ENCODE measurements at regions of chr17 and their contacts with region 1.

Region 1: DNA sequence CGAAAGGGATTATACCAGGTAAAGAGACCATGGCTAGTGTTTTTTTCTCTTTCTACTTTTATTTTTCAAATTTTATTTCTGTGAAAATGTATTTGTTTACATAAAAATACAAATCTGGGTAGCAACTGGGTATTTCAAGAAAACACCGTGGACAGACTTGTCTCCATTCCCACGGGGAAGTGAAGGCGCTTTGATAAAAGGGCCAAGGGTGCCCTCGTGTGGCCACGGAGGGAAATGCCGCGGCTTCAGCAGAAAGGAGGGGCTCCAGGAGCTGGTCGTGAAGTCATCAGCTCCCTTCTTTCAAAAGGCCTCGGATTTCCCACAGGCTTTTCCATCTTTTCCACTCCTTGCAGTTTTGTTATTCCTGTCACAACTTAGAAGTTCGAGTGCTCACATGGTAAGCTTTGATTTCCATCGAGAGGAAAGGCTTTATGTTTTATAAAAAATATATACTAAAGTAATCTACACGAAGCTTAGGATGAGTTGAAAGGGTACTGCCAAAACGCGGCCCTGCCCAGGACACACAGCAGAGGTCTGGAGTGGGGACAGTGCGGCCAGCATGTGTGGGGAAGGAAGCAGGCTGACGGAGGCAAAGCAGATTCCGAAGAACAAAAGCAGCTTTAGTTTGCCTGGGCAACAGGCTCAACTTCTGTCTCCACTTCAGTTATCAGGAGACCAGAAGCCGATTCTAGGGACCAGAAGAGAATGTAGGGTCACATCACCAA is 15.3 kb upstream of the MNT start:
- DNase-seq: peak; percentile 84

Region 2: GRCh38 chr17:2380950-2381649 is 35.1 kb before region 1 on chr17:
- CTCF ChIA-PET with region 1: interaction called, 95 read pairs
- POLR2A ChIA-PET with region 1: interaction called, 22 read pairs
- DNase-seq: no peak

Region 3: GRCh38 chr17:2386400-2387085 is 29.6 kb before region 1 on chr17:
- CTCF ChIA-PET with region 1: interaction called, 95 read pairs
- POLR2A ChIA-PET with region 1: interaction called, 22 read pairs
- DNase-seq: no peak

Region 4: GRCh38 chr17:2392252-2393173 is 23.7 kb before region 1 on chr17:
- CTCF ChIA-PET with region 1: interaction called, 12 read pairs
- POLR2A ChIA-PET with region 1: interaction called, 10 read pairs
- DNase-seq: peak; percentile 92

Measured in HEK293T (cell line).